Heart left ventricle (tissue), 16 donors: ENCODE measurements at regions of chr7 and their contacts with region 1.

Region 1: DNA sequence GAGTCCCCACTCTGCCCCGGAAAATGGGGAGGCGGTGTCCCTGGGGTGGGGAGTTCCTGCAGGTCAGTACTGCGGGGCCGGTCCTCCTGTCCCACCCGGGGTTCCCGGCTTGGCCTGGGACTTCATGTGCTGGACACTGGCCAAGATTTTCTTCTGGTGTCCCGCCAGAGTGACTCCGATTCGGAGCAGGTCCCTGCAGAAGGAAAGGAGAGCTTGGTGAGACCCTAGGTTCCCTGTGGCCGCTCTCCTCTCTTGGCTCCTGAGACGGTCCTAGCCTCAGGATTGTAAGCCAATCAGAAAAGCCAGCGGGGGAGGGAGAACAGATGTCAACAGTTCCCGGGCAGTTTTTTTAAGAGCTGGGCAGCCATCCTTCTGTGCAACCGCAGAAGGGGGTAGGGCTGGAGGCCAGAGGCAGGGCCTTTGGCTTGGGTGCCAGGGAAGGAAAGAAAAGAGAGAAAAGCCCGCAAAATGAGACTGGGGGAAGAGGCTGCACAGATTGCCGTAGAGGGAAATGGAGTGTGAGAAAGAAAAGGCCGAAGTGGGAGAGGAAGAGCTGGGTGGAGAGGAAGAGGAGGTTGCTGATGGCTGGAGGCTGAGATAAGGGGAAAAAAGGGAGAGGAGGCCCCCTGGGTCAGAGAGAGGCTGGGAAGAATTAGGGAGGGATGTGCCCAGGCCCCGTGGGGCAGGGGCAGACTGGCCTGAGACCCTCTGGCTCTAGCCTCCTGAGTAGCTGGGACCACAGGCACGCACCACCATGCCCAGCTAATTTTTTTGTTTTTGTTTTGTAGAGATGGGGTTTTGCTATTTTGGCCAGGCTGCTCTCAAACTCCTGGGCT is 23.7 kb downstream of the EPHB4 start:
- DNase-seq: peak; percentile 70 to 90 (median 82)
- ATAC-seq: peak; percentile 77 to 92 (median 88)
- H3K4me3 ChIP-seq: peak overlapping the region in 6 of 12 donors; percentile 1 to 41 (median 6)
- H3K27ac ChIP-seq: peak overlapping the region; percentile 3 to 73 (median 44)
- H3K4me1 ChIP-seq: peaks cover 5 to 56% (median 25%) of the 10 kb centered on the region in 12 donors
- H3K27me3 ChIP-seq: no peaks in the 10 kb centered on the region
- CTCF ChIP-seq: no peak
- POLR2A ChIP-seq: no peak

Region 2: DNA sequence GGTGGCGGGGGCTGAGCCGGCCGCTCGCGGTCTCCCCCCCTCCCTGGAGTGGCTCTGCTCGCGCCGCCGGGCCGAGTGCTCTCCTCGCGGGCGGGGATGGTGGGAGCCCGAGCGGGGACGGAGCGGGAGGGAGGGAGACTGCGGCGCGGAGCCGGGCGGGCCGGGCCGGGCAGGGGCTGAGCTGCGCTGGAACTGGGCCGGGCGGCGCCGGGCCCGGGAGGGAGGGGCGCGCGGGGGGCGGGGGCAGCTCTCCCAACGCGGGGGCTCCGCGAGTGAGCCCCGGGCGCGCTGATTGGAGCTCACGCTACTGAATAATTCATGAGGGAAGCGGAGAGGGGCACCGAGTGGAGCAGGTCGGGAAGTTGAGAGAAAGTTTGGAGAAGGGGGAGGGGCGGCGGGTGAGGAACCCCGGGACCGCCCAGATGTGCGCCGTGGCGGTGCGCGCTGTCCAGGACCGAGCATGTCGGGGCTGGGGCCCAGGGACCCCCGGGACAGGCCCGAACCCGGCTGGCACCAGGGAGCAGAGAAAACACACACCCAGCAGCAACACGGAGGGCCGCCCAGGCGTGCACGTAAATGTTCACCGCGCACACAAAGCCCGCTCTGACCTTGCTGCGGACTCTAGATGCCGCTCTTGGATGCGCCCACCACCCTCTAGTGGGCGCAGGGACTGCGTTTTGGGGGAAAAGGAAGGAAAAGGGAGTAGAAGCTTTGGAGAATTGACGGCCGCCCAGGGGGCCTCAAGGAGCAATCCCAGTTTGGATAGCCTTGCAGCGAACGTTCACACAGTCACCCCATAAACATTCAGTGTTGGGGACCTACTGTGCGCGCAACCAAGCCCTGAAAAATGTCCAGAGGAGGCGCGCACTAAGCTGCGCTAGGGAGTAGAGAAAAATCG is 24.0 kb after region 1 on chr7 and contains the start of gene EPHB4:
- intact Hi-C with region 1: loop called in 2 of 10 experiments (anchors 2 kb)
- DNase-seq: peak; percentile 85 to 88 (median 88)
- ATAC-seq: peak; percentile 52 to 80 (median 72)
- H3K4me3 ChIP-seq: peak within 1 kb of the TSS; percentile 61 to 86 (median 70)
- H3K27ac ChIP-seq: peak within 1 kb of the TSS; percentile 75 to 94 (median 86)
- H3K4me1 ChIP-seq: peaks cover 0 to 43% (median 13%) of the 10 kb centered on the region in 12 donors
- H3K27me3 ChIP-seq: peaks cover 0 to 28% (median 4%) of the 10 kb centered on the region in 9 donors
- CTCF ChIP-seq: peak in 7 of 12 donors; percentile 20 to 55 (median 34)
- POLR2A ChIP-seq: peak in 1 of 2 donors; percentile 45
- total RNA-seq, gene EPHB4: 18.0 to 76.2 (median 21.4) TPM

Region 3: GRCh38 chr7:100837099-100837836 is 33.7 kb after region 1 on chr7:
- intact Hi-C with region 1: loop called in 3 of 10 experiments (anchors 5 kb)
- DNase-seq: peak; percentile 93 to 96 (median 94)
- ATAC-seq: peak; percentile 88 to 95 (median 94)
- H3K4me3 ChIP-seq: peak overlapping the region; percentile 9 to 59 (median 50)
- H3K27ac ChIP-seq: peak overlapping the region; percentile 80 to 95 (median 90)
- H3K4me1 ChIP-seq: peaks cover 0 to 24% (median 7%) of the 10 kb centered on the region in 12 donors
- H3K27me3 ChIP-seq: no peaks in the 10 kb centered on the region
- CTCF ChIP-seq: peak in 1 of 12 donors; percentile 8
- POLR2A ChIP-seq: peak in 1 of 2 donors; percentile 49